K562 (cell line): ENCODE measurements at regions of chr4 and their contacts with region 1.

Region 1: DNA sequence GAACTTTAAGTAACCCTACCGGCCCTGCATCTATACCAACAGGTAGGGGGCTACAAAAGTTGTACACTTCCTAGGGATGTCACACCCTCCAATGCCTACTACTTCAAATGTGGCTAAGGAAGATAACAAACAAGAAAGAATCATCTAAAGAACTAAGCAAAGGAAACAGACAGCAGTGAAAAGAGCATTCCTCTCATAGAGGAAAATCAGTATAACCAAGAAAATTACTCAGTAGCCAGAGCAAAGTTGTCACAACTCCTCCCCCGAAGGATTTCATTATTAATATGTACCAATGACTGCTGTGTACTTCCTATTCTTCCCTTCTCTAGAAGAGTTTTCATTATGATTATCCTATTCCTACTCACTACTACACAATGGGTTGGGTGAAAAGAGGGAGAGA is 12.6 kb downstream of the ANKRD17 start:
- DNase-seq: peak in 3 of 4 experiments; percentile 15 to 72 (median 68)
- ATAC-seq: peak; percentile 82
- H3K4me3 ChIP-seq: no peak overlapping the region
- H3K27ac ChIP-seq: peak overlapping the region; percentile 60; the same call in 2 of the 3 replicates
- H3K4me1 ChIP-seq: peaks cover 0 to 18% of the 10 kb centered on the region in 2 experiments; a peak in 2 of 5 replicates
- H3K27me3 ChIP-seq: no peaks in the 10 kb centered on the region
- CTCF ChIP-seq: no peak
- EP300 ChIP-seq: peak; percentile 60; the same call in 1 of the 2 replicates
- POLR2A ChIP-seq: no peak
- RAD21 ChIP-seq: no peak

Region 2: GRCh38 chr4:73152893-73153292 is 93.1 kb before region 1 on chr4:
- CTCF ChIA-PET with region 1: no interaction called
- POLR2A ChIA-PET with region 1: no interaction called
- in situ Hi-C with region 1: no loop called
- intact Hi-C with region 1: no loop called
- DNase-seq: no peak
- ATAC-seq: no peak
- H3K4me3 ChIP-seq: no peak overlapping the region
- H3K27ac ChIP-seq: no peak overlapping the region
- H3K4me1 ChIP-seq: no peaks in the 10 kb centered on the region
- H3K27me3 ChIP-seq: no peaks in the 10 kb centered on the region
- CTCF ChIP-seq: no peak
- EP300 ChIP-seq: no peak
- POLR2A ChIP-seq: no peak
- RAD21 ChIP-seq: no peak

Region 3: DNA sequence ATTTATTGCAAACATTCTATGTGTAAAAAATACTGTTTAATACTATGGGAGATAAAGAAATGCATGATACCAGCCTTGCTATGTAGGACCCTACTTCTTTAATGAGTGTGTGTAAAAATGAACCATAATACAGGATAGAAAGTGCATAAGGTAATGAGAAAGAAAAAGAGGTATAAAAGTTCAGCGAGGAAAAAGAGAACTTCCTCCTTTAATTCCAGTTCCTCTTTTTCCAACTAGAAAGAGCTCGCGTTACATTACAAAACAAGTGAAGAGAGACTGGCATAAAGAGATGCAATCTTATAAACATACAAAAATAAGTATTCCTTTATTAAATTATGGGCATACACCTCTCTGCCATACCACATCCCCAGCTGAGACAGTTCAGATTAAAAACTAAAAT is 64.7 kb before region 1 on chr4:
- CTCF ChIA-PET with region 1: no interaction called
- POLR2A ChIA-PET with region 1: no interaction called
- in situ Hi-C with region 1: no loop called
- intact Hi-C with region 1: loop called (anchors 5 kb)
- DNase-seq: no peak
- ATAC-seq: peak; percentile 48
- H3K4me3 ChIP-seq: no peak overlapping the region
- H3K27ac ChIP-seq: peak overlapping the region; percentile 49; the same call in 1 of the 3 replicates
- H3K4me1 ChIP-seq: peaks cover 0 to 4% of the 10 kb centered on the region in 2 experiments; a peak in 2 of 5 replicates
- H3K27me3 ChIP-seq: no peaks in the 10 kb centered on the region
- CTCF ChIP-seq: no peak
- EP300 ChIP-seq: no peak
- POLR2A ChIP-seq: no peak
- RAD21 ChIP-seq: no peak

Region 4: GRCh38 chr4:73234712-73235111 is 11.2 kb before region 1 on chr4:
- CTCF ChIA-PET with region 1: no interaction called
- POLR2A ChIA-PET with region 1: interaction called, 12 read pairs
- in situ Hi-C with region 1: no loop called
- intact Hi-C with region 1: no loop called
- DNase-seq: no peak
- ATAC-seq: no peak; the same call in 2 of the 3 replicates
- H3K4me3 ChIP-seq: no peak overlapping the region
- H3K27ac ChIP-seq: no peak overlapping the region
- H3K4me1 ChIP-seq: peaks cover 0 to 21% of the 10 kb centered on the region in 2 experiments; a peak in 3 of 5 replicates
- H3K27me3 ChIP-seq: no peaks in the 10 kb centered on the region
- CTCF ChIP-seq: no peak
- EP300 ChIP-seq: no peak
- POLR2A ChIP-seq: no peak
- RAD21 ChIP-seq: no peak

Region 5: DNA sequence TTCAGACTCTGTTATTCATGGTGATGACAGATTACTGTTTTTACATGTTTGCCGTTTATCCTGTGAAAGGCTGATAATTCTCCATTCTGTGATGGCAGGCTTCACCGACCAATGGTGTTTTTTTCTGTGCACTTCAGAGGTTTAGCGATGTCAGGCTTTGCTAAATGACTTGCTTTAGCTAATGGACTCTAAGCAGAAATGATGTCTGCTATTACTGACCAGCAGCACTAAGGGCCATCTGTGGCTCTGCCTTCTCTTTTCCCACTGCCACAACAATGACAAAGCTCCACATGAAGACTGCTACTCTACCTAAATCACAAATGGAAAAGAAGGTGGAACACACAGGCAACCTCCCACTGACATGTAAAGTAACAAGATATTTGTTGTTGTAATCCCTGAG is 89.7 kb after region 1 on chr4:
- CTCF ChIA-PET with region 1: no interaction called
- POLR2A ChIA-PET with region 1: no interaction called
- in situ Hi-C with region 1: no loop called
- intact Hi-C with region 1: no loop called
- DNase-seq: no peak
- ATAC-seq: no peak
- H3K4me3 ChIP-seq: no peak overlapping the region
- H3K27ac ChIP-seq: no peak overlapping the region
- H3K4me1 ChIP-seq: no peaks in the 10 kb centered on the region
- H3K27me3 ChIP-seq: no peaks in the 10 kb centered on the region
- CTCF ChIP-seq: no peak
- EP300 ChIP-seq: no peak
- POLR2A ChIP-seq: no peak
- RAD21 ChIP-seq: no peak